Right cardiac atrium (tissue), 5 donors: ENCODE measurements at regions of chr16 and their contacts with region 1.

Region 1: DNA sequence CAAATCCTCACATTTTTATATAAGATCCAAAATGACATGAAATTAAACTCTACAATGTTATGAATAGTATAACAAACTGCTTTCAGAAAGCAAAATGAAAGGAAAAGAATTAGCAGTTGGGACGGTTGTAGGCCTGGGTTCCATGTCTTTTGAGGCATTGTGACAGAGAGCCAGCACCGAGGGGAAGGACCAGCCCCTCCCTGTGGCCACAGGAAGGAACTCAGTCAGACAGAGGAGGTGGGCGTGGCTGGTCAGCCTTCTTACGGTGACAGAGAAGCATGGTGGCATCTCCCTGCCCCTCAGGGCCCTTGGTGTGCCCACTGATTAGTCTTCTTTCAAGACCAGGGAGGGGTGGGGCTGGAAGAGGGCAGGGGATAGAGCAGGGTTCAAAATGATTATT is 5.7 kb downstream of the ZNF319 start:
- DNase-seq: peak; percentile 68 to 85 (median 80)
- ATAC-seq: peak; percentile 42 to 50
- H3K4me3 ChIP-seq: no peak overlapping the region
- H3K27ac ChIP-seq: no peak overlapping the region
- H3K4me1 ChIP-seq: no peaks in the 10 kb centered on the region
- H3K27me3 ChIP-seq: no peaks in the 10 kb centered on the region

Region 2: GRCh38 chr16:57653936-57654335 is 340.8 kb before region 1 on chr16:
- intact Hi-C with region 1: loop called in 1 of 4 experiments (anchors 10 kb)
- DNase-seq: no peak
- ATAC-seq: peak in 1 of 2 donors; percentile 21
- H3K4me3 ChIP-seq: no peak overlapping the region
- H3K27ac ChIP-seq: no peak overlapping the region
- H3K4me1 ChIP-seq: no peaks in the 10 kb centered on the region
- H3K27me3 ChIP-seq: no peaks in the 10 kb centered on the region

Region 3: GRCh38 chr16:57757326-57757786 is 237.4 kb before region 1 on chr16:
- intact Hi-C with region 1: loop called in 1 of 4 experiments (anchors 10 kb)
- DNase-seq: peak; percentile 90 to 95 (median 95)
- ATAC-seq: peak; percentile 83 to 86
- H3K4me3 ChIP-seq: no peak overlapping the region
- H3K27ac ChIP-seq: no peak overlapping the region
- H3K4me1 ChIP-seq: no peaks in the 10 kb centered on the region
- H3K27me3 ChIP-seq: no peaks in the 10 kb centered on the region